Panc1 (cell line): ENCODE measurements at regions of chr3 and their contacts with region 1.

Region 1: GRCh38 chr3:15815696-15816095 is 17.9 kb upstream of the ANKRD28 start:
- DNase-seq: no peak
- ATAC-seq: peak; percentile 56; the same call in 1 of the 2 replicates
- H3K4me3 ChIP-seq: no peak overlapping the region
- H3K27ac ChIP-seq: peak overlapping the region; percentile 71; the same call in 1 of the 2 replicates
- H3K4me1 ChIP-seq: peaks cover 37% of the 10 kb centered on the region; the same call in 1 of the 2 replicates
- H3K27me3 ChIP-seq: no peaks in the 10 kb centered on the region
- CTCF ChIP-seq: peak; percentile 32; the same call in 1 of the 2 replicates

Region 2: DNA sequence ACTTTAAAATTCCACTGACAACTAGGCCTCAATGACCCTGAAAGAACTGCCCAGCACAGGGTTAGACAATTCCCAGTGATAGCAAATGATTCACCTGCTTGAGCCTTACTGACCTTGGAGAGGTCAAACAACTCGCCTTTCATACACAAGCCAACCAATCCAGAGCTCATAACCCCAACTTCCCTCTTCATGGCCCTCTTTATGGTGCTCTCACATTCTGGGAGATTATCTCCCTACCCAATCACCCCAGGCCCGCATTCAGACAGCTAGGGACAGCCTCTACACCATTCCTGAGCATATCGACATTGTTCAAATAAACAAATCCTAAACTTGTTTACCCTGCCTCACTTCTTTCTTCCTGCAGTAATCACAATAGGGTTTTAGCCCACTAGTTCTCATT is 261.9 kb before region 1 on chr3:
- CTCF ChIA-PET with region 1: no interaction called
- POLR2A ChIA-PET with region 1: no interaction called
- in situ Hi-C with region 1: no loop called
- intact Hi-C with region 1: no loop called
- DNase-seq: no peak
- ATAC-seq: no peak
- H3K4me3 ChIP-seq: no peak overlapping the region
- H3K27ac ChIP-seq: no peak overlapping the region
- H3K4me1 ChIP-seq: no peaks in the 10 kb centered on the region; the same call in 1 of the 2 replicates
- H3K27me3 ChIP-seq: no peaks in the 10 kb centered on the region
- CTCF ChIP-seq: no peak

Region 3: GRCh38 chr3:15804553-15805095 is 11.1 kb before region 1 on chr3:
- CTCF ChIA-PET with region 1: no interaction called
- POLR2A ChIA-PET with region 1: no interaction called
- in situ Hi-C with region 1: no loop called
- intact Hi-C with region 1: no loop called
- DNase-seq: no peak
- ATAC-seq: no peak
- H3K4me3 ChIP-seq: no peak overlapping the region
- H3K27ac ChIP-seq: peak overlapping the region; percentile 77
- H3K4me1 ChIP-seq: peaks cover 24% of the 10 kb centered on the region
- H3K27me3 ChIP-seq: no peaks in the 10 kb centered on the region
- CTCF ChIP-seq: no peak

Region 4: DNA sequence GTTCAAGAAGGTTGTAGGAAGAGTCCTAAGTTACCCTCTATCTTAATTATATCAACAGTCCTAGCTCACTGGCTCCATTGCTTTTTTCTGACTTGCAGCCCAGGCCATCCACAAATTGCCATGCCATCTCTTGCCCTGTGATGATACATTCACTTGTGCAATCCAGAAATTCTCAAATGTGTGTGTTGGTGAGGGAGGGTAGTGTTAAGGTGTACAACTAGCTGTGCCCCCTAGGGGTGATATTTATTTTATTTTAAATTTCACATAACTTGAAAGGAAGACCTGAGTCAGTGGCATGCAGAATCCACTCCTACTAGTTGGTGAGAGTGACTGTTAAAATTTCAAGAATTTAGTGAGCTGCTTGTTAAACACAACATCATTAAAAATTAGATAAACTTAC is 138.1 kb after region 1 on chr3:
- CTCF ChIA-PET with region 1: no interaction called
- POLR2A ChIA-PET with region 1: no interaction called
- in situ Hi-C with region 1: no loop called
- intact Hi-C with region 1: no loop called
- DNase-seq: no peak
- ATAC-seq: no peak
- H3K4me3 ChIP-seq: no peak overlapping the region
- H3K27ac ChIP-seq: no peak overlapping the region
- H3K4me1 ChIP-seq: no peaks in the 10 kb centered on the region
- H3K27me3 ChIP-seq: no peaks in the 10 kb centered on the region
- CTCF ChIP-seq: peak; percentile 16; the same call in 1 of the 2 replicates

Region 5: DNA sequence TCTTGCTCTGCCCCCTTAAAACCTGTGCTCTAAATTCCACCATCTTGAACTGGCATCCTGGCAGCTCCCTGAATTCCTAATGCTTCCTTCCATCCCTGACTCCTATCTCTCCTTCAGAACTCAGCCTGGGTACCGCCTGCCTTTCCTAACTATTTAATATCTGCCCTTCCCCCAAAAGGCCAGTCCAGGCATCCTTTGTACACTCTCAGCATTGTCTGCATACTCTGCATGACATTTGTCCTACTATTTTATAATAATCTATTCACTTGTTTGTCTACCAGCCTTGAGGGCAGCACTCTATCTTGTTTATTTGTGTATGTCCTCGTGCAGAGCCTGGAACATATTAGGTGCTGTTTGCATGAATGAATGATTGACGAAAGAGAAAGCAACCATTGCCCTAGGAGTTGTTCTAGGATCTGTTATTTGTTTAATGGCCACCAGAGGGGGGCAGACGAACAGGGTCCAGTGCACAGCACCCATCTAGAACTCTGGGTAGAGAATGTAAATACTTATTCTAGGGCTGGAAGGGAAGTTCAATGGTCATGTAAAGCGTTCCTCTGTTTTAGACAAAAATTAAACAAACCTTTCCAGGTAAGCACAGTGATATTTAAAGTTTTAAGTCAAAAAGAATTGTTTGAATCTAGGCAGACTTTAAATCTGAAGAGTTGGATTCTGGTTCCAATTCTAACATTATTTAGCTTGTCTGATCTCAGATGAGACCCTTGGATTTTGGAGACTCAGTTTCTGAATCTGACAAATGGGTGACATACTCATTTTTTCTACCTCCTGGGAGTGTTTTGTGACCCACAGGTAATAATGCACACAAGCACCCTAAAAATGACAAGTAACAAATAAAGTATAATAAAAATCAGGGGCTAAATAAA is 233.0 kb after region 1 on chr3:
- CTCF ChIA-PET with region 1: no interaction called
- POLR2A ChIA-PET with region 1: no interaction called
- in situ Hi-C with region 1: no loop called
- intact Hi-C with region 1: loop called (anchors 5 kb)
- DNase-seq: no peak
- ATAC-seq: peak; percentile 99
- H3K4me3 ChIP-seq: no peak overlapping the region
- H3K27ac ChIP-seq: peak overlapping the region; percentile 66
- H3K4me1 ChIP-seq: peaks cover 6% of the 10 kb centered on the region
- H3K27me3 ChIP-seq: no peaks in the 10 kb centered on the region
- CTCF ChIP-seq: peak; percentile 79